ENCODE measurements at regions of chr6 and their contacts with region 1.

Region 1: DNA sequence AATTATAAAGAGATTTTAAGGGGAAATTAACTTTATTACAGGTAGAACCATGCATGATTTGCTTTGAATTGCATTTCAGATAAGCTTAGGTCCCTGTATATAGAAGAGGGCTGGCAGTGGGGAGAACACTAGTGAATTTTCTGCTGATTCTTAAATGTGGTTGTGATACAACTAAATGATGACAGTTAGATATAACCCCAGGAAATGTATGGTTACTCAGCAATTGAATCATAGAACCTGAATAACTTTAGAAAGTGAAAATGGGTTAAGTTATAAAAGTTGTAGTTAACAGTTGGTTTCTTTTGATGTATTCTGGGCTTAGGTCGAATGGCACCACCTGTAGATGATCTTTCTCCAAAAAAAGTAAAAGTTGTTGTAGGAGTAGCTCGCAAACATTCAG is 70.1 kb downstream of the PHF3 start:
- DNase-seq: no peak
- CTCF ChIP-seq: no peak

Region 2: GRCh38 chr6:63689421-63689820 is 16.3 kb before region 1 on chr6:
- CTCF ChIA-PET with region 1: interaction called, 15 read pairs
- POLR2A ChIA-PET with region 1: no interaction called
- DNase-seq: no peak
- CTCF ChIP-seq: no peak